ENCODE measurements at regions of chr6 and their contacts with region 1.

Region 1: GRCh38 chr6:108250240-108250866 is 10.5 kb downstream of the SNX3 start:
- DNase-seq: peak; percentile 30
- ATAC-seq: peak; percentile 37
- H3K4me3 Mint-ChIP-seq: no peak overlapping the region
- H3K27ac Mint-ChIP-seq: no peak overlapping the region
- H3K4me1 Mint-ChIP-seq: peaks cover 51% of the 10 kb centered on the region
- H3K27me3 Mint-ChIP-seq: no peaks in the 10 kb centered on the region
- CTCF ChIP-seq: peak; percentile 39

Region 2: GRCh38 chr6:108039681-108040080 is 210.7 kb before region 1 on chr6:
- CTCF ChIA-PET with region 1: no interaction called
- POLR2A ChIA-PET with region 1: no interaction called
- intact Hi-C with region 1: no loop called
- DNase-seq: no peak
- ATAC-seq: no peak
- H3K4me3 Mint-ChIP-seq: no peak overlapping the region
- H3K27ac Mint-ChIP-seq: no peak overlapping the region
- H3K4me1 Mint-ChIP-seq: no peaks in the 10 kb centered on the region
- H3K27me3 Mint-ChIP-seq: no peaks in the 10 kb centered on the region
- CTCF ChIP-seq: no peak

Region 3: GRCh38 chr6:108193120-108193519 is 57.2 kb before region 1 on chr6:
- CTCF ChIA-PET with region 1: no interaction called
- POLR2A ChIA-PET with region 1: no interaction called
- intact Hi-C with region 1: no loop called
- DNase-seq: no peak
- ATAC-seq: no peak
- H3K4me3 Mint-ChIP-seq: no peak overlapping the region
- H3K27ac Mint-ChIP-seq: no peak overlapping the region
- H3K4me1 Mint-ChIP-seq: no peaks in the 10 kb centered on the region
- H3K27me3 Mint-ChIP-seq: peaks cover 10% of the 10 kb centered on the region
- CTCF ChIP-seq: no peak

Region 4: DNA sequence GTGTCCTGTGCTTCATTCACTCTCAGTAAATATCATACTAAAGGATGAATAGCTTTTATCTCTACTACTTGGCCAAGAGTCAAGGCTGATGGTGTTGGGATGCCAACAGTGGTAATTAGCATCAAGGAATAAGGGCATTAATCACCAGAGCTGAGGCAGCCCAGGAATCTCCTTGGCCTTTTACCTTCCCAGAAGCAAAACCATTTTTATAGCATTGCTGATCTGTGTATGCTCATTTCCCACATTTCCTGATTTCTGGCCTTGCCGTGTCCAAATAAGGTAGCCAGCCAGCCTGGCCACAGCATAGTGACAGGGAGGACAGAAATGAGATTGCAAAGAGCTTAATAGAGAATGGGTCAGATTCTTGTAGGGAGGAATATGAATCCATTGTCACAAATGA is 233.7 kb after region 1 on chr6:
- CTCF ChIA-PET with region 1: no interaction called
- POLR2A ChIA-PET with region 1: no interaction called
- intact Hi-C with region 1: loop called (anchors 10 kb)
- DNase-seq: no peak
- ATAC-seq: no peak
- H3K4me3 Mint-ChIP-seq: no peak overlapping the region
- H3K27ac Mint-ChIP-seq: no peak overlapping the region
- H3K4me1 Mint-ChIP-seq: peaks cover 3% of the 10 kb centered on the region
- H3K27me3 Mint-ChIP-seq: no peaks in the 10 kb centered on the region
- CTCF ChIP-seq: no peak

Measured in activated CD8-positive, alpha-beta T cell treated with anti-CD3 and anti-CD28 coated beads for 36 hours (primary cell).